ENCODE measurements at regions of chr1 and their contacts with region 1.

Region 1: GRCh38 chr1:16958503-16958902 is 21.9 kb downstream of the MFAP2 start:
- DNase-seq: peak in 1 of 3 donors; percentile 20
- ATAC-seq: no peak
- H3K4me3 ChIP-seq: no peak overlapping the region
- H3K27ac ChIP-seq: no peak overlapping the region
- H3K4me1 ChIP-seq: no peaks in the 10 kb centered on the region
- H3K27me3 ChIP-seq: no peaks in the 10 kb centered on the region

Region 2: GRCh38 chr1:17045634-17046333 is 87.3 kb after region 1 on chr1:
- intact Hi-C with region 1: loop called (anchors 5 kb)
- DNase-seq: no peak
- ATAC-seq: peak; percentile 70 to 71
- H3K4me3 ChIP-seq: peak overlapping the region; percentile 39
- H3K27ac ChIP-seq: no peak overlapping the region
- H3K4me1 ChIP-seq: no peaks in the 10 kb centered on the region
- H3K27me3 ChIP-seq: no peaks in the 10 kb centered on the region

Measured in right cardiac atrium (tissue), 5 donors.